Transverse colon (tissue), 4 donors: ENCODE measurements at regions of chr21 and their contacts with region 1.

Region 1: GRCh38 chr21:45347712-45348499 is 57.1 kb upstream of the COL18A1 start:
- DNase-seq: no peak
- H3K4me3 ChIP-seq: no peak overlapping the region
- H3K27ac ChIP-seq: peak overlapping the region in 3 of 4 donors; percentile 23 to 36 (median 33)
- H3K4me1 ChIP-seq: peaks cover 0 to 6% (median 2%) of the 10 kb centered on the region in 4 donors
- H3K27me3 ChIP-seq: no peaks in the 10 kb centered on the region
- CTCF ChIP-seq: no peak
- EP300 ChIP-seq: no peak
- POLR2A ChIP-seq: no peak

Region 2: DNA sequence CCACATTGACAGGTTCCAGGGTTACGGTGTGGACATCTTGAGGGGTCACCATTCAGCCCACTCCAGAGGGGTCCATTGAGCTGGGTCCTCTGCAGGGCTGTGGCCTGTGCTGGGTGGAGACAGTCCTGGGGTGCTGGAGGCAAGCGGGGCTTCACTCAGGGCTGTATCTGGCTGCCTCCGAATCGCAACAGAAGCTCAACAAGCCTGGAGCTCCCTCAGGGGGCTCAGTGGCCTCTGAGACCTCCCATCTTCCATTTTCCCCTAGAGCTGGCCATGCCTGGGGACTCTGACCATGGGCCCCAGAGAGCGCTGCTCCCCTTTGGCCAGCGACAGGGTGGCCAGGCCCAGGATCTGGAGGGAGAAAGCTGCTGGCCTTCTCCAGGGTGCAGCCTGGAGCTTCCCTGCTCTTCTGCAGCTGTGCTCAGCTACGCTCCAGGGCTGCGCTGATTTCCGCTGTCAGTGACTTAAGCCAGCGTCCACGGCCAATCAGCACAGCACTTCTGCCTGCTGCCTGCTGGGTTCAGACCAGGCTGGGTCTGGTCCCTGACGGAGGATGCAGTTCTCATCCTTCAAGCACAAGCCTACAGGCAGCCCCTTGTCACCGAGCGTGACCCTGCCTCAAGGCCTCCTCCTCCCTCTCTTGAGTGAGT is 318.5 kb before region 1 on chr21:
- in situ Hi-C with region 1: no loop called
- intact Hi-C with region 1: no loop called
- DNase-seq: no peak
- H3K4me3 ChIP-seq: no peak overlapping the region
- H3K27ac ChIP-seq: peak overlapping the region; percentile 20 to 62 (median 52)
- H3K4me1 ChIP-seq: peaks cover 3 to 38% (median 12%) of the 10 kb centered on the region in 4 donors
- H3K27me3 ChIP-seq: peaks cover 18% of the 10 kb centered on the region
- CTCF ChIP-seq: no peak
- EP300 ChIP-seq: no peak
- POLR2A ChIP-seq: no peak

Region 3: DNA sequence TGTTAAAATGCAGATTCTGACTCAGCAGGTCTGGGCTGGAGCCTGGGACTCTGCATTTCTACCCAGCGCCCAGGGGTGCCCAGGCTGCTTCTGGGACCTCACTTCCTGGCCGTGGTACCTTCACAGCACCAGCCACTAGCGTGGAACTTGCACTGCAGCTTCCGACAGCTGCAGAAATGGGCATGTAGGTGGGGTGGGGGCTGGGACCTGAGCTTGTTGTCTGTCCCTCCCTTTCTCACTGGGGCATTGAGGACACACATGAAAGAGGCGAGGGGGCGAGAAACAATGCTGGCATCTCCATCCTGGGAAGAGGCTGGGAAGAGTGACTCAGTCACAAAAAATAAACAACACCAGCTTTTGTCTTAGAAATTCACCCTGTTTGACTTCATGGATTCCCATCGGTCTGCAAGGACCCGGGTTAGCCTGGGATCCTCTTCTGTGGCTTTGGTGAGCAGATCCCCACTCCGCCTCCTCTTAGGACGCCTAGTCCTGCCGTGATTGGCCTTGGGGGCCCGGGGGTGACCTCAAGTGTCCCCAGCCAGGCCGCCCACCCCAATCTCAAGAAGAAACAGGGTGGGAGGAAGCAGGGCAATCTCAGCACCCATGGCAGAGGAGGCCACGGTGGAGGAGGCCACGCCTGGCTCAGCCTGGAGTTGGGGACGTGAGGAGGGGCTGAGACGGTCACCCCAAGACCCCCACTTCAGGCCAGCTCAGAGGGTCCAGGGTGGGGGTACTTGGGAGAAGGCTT is 30.3 kb before region 1 on chr21:
- in situ Hi-C with region 1: no loop called
- intact Hi-C with region 1: loop called (anchors 2 kb)
- DNase-seq: no peak
- H3K4me3 ChIP-seq: no peak overlapping the region
- H3K27ac ChIP-seq: peak overlapping the region; percentile 53 to 79 (median 72)
- H3K4me1 ChIP-seq: peaks cover 12 to 39% (median 25%) of the 10 kb centered on the region in 4 donors
- H3K27me3 ChIP-seq: no peaks in the 10 kb centered on the region
- CTCF ChIP-seq: no peak
- EP300 ChIP-seq: no peak
- POLR2A ChIP-seq: no peak